Caco-2 (cell line): ENCODE measurements at regions of chr19 and their contacts with region 1.

Region 1: DNA sequence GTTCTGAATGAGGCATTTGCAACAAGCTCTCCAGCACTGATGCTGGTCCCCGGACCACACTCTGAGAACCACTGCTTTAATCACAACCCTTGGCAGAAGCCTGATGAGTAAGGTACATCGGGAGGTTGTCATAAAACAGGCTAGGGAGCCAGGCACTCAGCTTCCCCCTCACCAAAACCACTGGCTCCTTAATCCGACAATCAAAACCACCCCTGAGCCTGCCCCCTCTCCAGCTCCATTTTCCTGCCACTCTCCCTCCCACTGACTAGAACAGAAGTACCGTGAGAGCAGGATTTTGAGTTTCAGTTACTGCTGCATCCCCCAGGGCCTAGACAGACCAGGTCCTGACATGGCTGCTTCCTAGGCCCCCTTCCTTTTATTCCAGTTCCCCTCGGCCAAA is 7.2 kb downstream of the GSK3A start:
- DNase-seq: no peak
- H3K4me3 ChIP-seq: no peak overlapping the region
- H3K4me3 Mint-ChIP-seq: no peak overlapping the region
- H3K27ac Mint-ChIP-seq: peak overlapping the region; percentile 18
- H3K4me1 ChIP-seq: peaks cover 6% of the 10 kb centered on the region; the same call in 1 of the 2 replicates
- H3K4me1 Mint-ChIP-seq: peaks cover 12% of the 10 kb centered on the region
- H3K27me3 ChIP-seq: no peaks in the 10 kb centered on the region
- H3K27me3 Mint-ChIP-seq: no peaks in the 10 kb centered on the region
- CTCF ChIP-seq: no peak

Region 2: DNA sequence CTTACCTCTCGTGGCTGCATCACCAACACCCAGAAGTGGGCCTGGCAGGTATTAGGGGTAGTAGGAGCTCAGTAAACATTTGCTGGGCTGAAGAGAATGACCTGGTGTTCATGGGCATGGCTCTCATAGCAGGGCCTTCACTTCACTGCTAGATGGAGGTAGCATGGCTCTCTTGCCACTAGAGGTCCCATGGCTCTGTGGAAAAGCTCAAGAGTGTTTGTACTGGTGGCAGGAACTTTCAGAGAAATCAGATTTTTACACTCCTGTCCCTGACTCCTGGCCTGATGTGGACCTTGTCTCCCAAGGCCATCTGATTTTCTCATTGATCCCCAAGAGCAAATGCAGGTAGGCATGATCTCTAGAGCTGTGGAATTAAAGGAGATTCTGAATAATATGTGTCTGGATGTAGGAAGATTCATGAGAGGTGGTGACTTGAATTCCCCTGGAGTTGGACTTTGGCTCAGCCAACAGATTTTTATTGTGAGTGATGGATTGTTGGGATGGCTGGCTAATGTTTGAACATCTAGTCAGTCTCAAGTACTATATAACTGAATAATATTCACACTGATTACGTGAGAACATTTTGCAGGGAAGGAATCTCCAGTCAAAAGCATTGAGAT is 153.5 kb before region 1 on chr19:
- CTCF ChIA-PET with region 1: no interaction called
- POLR2A ChIA-PET with region 1: interaction called, 10 read pairs
- intact Hi-C with region 1: no loop called
- DNase-seq: peak; percentile 66 to 67
- H3K4me3 ChIP-seq: no peak overlapping the region
- H3K4me3 Mint-ChIP-seq: peak overlapping the region; percentile 52
- H3K27ac Mint-ChIP-seq: peak overlapping the region; percentile 68
- H3K4me1 ChIP-seq: peaks cover 17% of the 10 kb centered on the region
- H3K4me1 Mint-ChIP-seq: peaks cover 32% of the 10 kb centered on the region
- H3K27me3 ChIP-seq: no peaks in the 10 kb centered on the region
- H3K27me3 Mint-ChIP-seq: no peaks in the 10 kb centered on the region
- CTCF ChIP-seq: peak; percentile 54 to 77